ENCODE measurements at regions of chr11 and their contacts with region 1.

Region 1: GRCh38 chr11:58524232-58525036 is 16.5 kb upstream of the OR5B21 start:
- DNase-seq: peak in 8 of 9 experiments; percentile 17 to 85 (median 54)
- ATAC-seq: peak; percentile 71
- H3K4me3 ChIP-seq: peak overlapping the region in 1 of 2 experiments; percentile 24
- H3K4me3 Mint-ChIP-seq: peak overlapping the region; percentile 75
- H3K27ac ChIP-seq: peak overlapping the region; percentile 75 to 80
- H3K27ac Mint-ChIP-seq: peak overlapping the region; percentile 96
- H3K4me1 ChIP-seq: peaks cover 65% of the 10 kb centered on the region
- H3K4me1 Mint-ChIP-seq: peaks cover 69% of the 10 kb centered on the region
- H3K27me3 ChIP-seq: no peaks in the 10 kb centered on the region
- H3K27me3 Mint-ChIP-seq: no peaks in the 10 kb centered on the region
- CTCF ChIP-seq: peak; percentile 90

Region 2: DNA sequence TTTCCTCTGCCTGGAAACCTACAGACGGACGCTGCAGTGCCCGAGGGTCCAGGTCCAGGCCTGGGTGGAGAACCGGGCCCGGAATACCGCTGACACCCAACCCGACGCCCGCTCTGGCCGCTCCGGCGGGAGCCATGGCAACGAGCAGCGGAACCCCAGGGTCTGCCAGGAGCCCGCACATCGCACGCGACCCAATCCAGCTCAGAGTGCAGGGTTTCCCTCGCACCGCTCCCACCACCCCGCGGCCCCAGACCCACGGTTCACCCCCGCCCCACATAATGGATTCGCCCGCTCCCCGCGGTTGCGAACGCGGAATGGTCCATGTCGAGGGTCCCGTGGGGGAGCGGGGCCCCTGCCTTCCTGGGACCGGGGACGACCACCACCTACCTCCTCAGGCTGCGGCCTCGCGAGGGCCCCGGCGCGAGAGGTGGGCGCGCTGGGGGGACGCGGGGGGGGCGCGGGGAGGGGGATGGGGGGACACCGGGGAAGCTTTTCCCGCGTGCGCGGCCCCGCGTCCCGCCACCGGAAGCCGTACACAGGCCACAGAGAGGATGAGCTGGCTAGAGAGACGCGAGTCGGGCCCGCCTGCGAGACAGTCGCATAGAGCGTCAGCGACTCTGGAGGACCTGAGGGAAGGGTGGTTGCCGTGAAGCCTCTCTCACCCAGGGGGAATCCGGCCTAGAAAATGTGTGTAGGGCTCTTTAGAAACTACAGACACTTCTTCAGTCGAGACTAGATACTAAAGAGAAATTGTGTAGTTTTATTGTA is 1188.9 kb before region 1 on chr11 and contains the start of gene SSRP1:
- CTCF ChIA-PET with region 1: no interaction called
- POLR2A ChIA-PET with region 1: no interaction called
- intact Hi-C with region 1: loop called in 1 of 2 experiments (anchors 10 kb)
- DNase-seq: peak; percentile 70 to 95 (median 86)
- ATAC-seq: peak; percentile 96
- H3K4me3 ChIP-seq: peak within 1 kb of the TSS; percentile 78 to 82
- H3K4me3 Mint-ChIP-seq: peak within 1 kb of the TSS; percentile 86
- H3K27ac ChIP-seq: peak within 1 kb of the TSS; percentile 83 to 91
- H3K27ac Mint-ChIP-seq: peak within 1 kb of the TSS; percentile 94
- H3K4me1 ChIP-seq: peaks cover 23% of the 10 kb centered on the region
- H3K4me1 Mint-ChIP-seq: peaks cover 33% of the 10 kb centered on the region
- H3K27me3 ChIP-seq: no peaks in the 10 kb centered on the region
- H3K27me3 Mint-ChIP-seq: no peaks in the 10 kb centered on the region
- CTCF ChIP-seq: no peak
- total RNA-seq, gene SSRP1: 34.3 to 36.3 TPM

Region 3: GRCh38 chr11:57657194-57658022 is 867.0 kb before region 1 on chr11 and contains the start of gene CLP1:
- CTCF ChIA-PET with region 1: interaction called, 5 read pairs
- POLR2A ChIA-PET with region 1: no interaction called
- intact Hi-C with region 1: loop called in 1 of 2 experiments (anchors 5 kb)
- DNase-seq: peak; percentile 97 to 100 (median 99)
- ATAC-seq: peak; percentile 94
- H3K4me3 ChIP-seq: peak within 1 kb of the TSS; percentile 59 to 74
- H3K4me3 Mint-ChIP-seq: peak within 1 kb of the TSS; percentile 94
- H3K27ac ChIP-seq: peak within 1 kb of the TSS; percentile 83
- H3K27ac Mint-ChIP-seq: peak within 1 kb of the TSS; percentile 90
- H3K4me1 ChIP-seq: peaks cover 11% of the 10 kb centered on the region
- H3K4me1 Mint-ChIP-seq: peaks cover 43% of the 10 kb centered on the region
- H3K27me3 ChIP-seq: no peaks in the 10 kb centered on the region
- H3K27me3 Mint-ChIP-seq: no peaks in the 10 kb centered on the region
- CTCF ChIP-seq: no peak
- total RNA-seq, gene CLP1: 22.7 to 27.1 TPM

Region 4: GRCh38 chr11:58498464-58498863 is 26.0 kb before region 1 on chr11:
- CTCF ChIA-PET with region 1: interaction called, 17 read pairs
- POLR2A ChIA-PET with region 1: no interaction called
- intact Hi-C with region 1: no loop called
- DNase-seq: peak in 8 of 9 experiments; percentile 11 to 62 (median 30)
- ATAC-seq: peak; percentile 75
- H3K4me3 ChIP-seq: no peak overlapping the region
- H3K4me3 Mint-ChIP-seq: peak overlapping the region; percentile 47
- H3K27ac ChIP-seq: peak overlapping the region; percentile 34 to 77
- H3K27ac Mint-ChIP-seq: peak overlapping the region; percentile 86
- H3K4me1 ChIP-seq: peaks cover 40% of the 10 kb centered on the region
- H3K4me1 Mint-ChIP-seq: peaks cover 40% of the 10 kb centered on the region
- H3K27me3 ChIP-seq: no peaks in the 10 kb centered on the region
- H3K27me3 Mint-ChIP-seq: no peaks in the 10 kb centered on the region
- CTCF ChIP-seq: no peak

Region 5: DNA sequence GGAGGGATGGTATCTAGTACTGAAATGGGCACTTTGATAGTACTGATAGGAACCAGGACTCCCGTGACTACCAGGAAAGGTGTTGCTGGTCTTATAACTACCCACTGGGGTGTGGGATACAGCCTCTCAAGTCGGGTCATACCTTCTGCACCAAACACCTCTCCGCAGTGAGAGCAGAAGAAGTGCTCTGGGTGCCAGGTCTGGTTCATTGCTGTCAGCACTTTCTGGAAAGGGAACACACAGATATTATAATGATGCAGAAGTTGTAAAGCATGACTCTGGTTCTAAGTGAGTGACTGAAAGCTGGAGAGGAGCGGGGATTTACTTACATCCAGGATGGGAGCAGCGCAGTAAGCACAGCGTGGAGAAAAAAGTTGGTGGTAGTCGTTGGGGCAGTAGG is 25.2 kb after region 1 on chr11:
- CTCF ChIA-PET with region 1: interaction called, 10 read pairs
- POLR2A ChIA-PET with region 1: no interaction called
- intact Hi-C with region 1: no loop called
- DNase-seq: no peak
- ATAC-seq: no peak
- H3K4me3 ChIP-seq: no peak overlapping the region
- H3K4me3 Mint-ChIP-seq: no peak overlapping the region
- H3K27ac ChIP-seq: no peak overlapping the region
- H3K27ac Mint-ChIP-seq: no peak overlapping the region
- H3K4me1 ChIP-seq: no peaks in the 10 kb centered on the region
- H3K4me1 Mint-ChIP-seq: peaks cover 22% of the 10 kb centered on the region
- H3K27me3 ChIP-seq: no peaks in the 10 kb centered on the region
- H3K27me3 Mint-ChIP-seq: no peaks in the 10 kb centered on the region
- CTCF ChIP-seq: no peak

Measured in CD8-positive, alpha-beta T cell (primary cell).